Activated CD4-positive, alpha-beta T cell treated with anti-CD3 and anti-CD28 coated beads for 36 hours (primary cell): ENCODE measurements at regions of chrX and their contacts with region 1.

Region 1: GRCh38 chrX:133776072-133776471 is 209.3 kb downstream of the GPC3 start:
- DNase-seq: peak; percentile 62
- ATAC-seq: no peak
- H3K4me3 Mint-ChIP-seq: no peak overlapping the region
- H3K27ac Mint-ChIP-seq: no peak overlapping the region
- H3K4me1 Mint-ChIP-seq: peaks cover 1% of the 10 kb centered on the region
- H3K27me3 Mint-ChIP-seq: no peaks in the 10 kb centered on the region

Region 2: DNA sequence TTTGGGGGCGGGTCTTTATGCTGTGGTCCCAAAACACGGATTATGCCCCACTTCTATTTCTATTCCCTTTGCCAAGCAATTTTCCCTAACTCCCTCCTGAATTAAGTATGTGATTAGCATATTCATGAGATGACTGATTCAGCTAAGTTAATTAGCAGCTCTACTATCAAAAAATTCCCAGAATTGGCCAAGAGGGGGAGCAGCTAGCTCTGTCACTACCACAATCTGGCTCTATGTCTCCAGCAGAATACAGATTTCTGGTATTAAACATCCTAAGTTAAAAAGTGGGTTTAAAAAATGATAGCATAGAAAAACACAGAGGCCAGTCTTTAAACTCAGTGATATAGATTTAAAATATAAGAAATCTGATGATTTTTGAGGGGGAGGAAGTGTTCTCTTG is 441.0 kb before region 1 on chrX:
- CTCF ChIA-PET with region 1: no interaction called
- POLR2A ChIA-PET with region 1: no interaction called
- intact Hi-C with region 1: loop called in 1 of 2 experiments (anchors 10 kb)
- DNase-seq: peak; percentile 10
- ATAC-seq: no peak
- H3K4me3 Mint-ChIP-seq: no peak overlapping the region
- H3K27ac Mint-ChIP-seq: no peak overlapping the region
- H3K4me1 Mint-ChIP-seq: no peaks in the 10 kb centered on the region
- H3K27me3 Mint-ChIP-seq: no peaks in the 10 kb centered on the region

Region 3: GRCh38 chrX:133698298-133698697 is 77.8 kb before region 1 on chrX:
- CTCF ChIA-PET with region 1: interaction called, 3 read pairs
- POLR2A ChIA-PET with region 1: no interaction called
- intact Hi-C with region 1: loop called (anchors 2 to 10 kb)
- DNase-seq: no peak
- ATAC-seq: no peak
- H3K4me3 Mint-ChIP-seq: no peak overlapping the region
- H3K27ac Mint-ChIP-seq: no peak overlapping the region
- H3K4me1 Mint-ChIP-seq: no peaks in the 10 kb centered on the region
- H3K27me3 Mint-ChIP-seq: no peaks in the 10 kb centered on the region

Region 4: GRCh38 chrX:133709486-133709885 is 66.6 kb before region 1 on chrX:
- CTCF ChIA-PET with region 1: no interaction called
- POLR2A ChIA-PET with region 1: no interaction called
- intact Hi-C with region 1: loop called in 1 of 2 experiments (anchors 10 kb)
- DNase-seq: no peak
- ATAC-seq: no peak
- H3K4me3 Mint-ChIP-seq: no peak overlapping the region
- H3K27ac Mint-ChIP-seq: no peak overlapping the region
- H3K4me1 Mint-ChIP-seq: no peaks in the 10 kb centered on the region
- H3K27me3 Mint-ChIP-seq: no peaks in the 10 kb centered on the region